Activated CD8-positive, alpha-beta T cell treated with anti-CD3 and anti-CD28 coated beads, Interleukin-2, amount 10 ng/mL, durations not matched to agents 7 days and 5 days (primary cell): ENCODE measurements at regions of chr20 and their contacts with region 1.

Region 1: DNA sequence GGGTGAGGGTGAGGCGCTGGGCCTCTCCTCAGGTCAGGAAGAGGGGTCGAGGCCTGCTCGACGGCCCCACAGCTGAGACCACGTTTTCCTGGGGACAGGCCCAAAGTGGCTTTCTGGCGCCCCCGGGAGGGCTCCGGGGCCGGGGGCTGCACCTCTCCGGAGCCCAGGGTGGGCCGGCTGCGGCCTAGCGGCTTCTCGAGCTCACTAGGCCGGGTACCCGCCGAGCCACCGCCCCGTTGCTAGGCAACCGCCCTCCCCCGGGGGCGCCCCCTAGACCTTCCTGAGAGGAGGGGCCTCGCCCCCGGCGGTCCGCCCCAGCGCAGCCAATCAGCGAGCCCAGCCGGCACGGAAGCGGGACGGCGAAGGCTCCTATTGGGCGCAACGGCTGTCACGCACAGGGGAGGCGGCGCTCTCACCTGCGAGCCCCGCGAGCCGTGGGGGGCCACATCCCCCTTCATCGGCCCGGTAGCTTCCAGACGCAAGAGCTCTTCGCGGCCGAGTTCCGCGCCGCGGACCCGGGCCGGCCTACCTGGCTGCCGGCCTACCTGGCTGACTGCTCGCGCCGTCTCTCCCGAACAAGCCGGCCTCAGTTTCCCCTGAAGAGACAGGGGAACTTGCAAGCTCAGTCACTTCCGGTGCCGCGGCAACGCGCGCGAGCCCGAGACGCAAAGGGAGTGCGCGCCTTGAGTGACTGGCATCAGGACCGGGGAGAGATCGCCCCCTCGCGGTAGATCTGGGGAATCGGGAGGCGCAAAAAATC is 831 bp upstream of the BCL2L1 start:
- DNase-seq: peak; percentile 99
- ATAC-seq: peak; percentile 92
- H3K4me3 Mint-ChIP-seq: peak overlapping the region; percentile 90
- H3K27ac Mint-ChIP-seq: peak overlapping the region; percentile 94
- H3K4me1 Mint-ChIP-seq: peaks cover 31% of the 10 kb centered on the region
- H3K27me3 Mint-ChIP-seq: no peaks in the 10 kb centered on the region

Region 2: GRCh38 chr20:31630187-31630790 is 93.2 kb before region 1 on chr20:
- CTCF ChIA-PET with region 1: interaction called, 146 read pairs
- POLR2A ChIA-PET with region 1: interaction called, 12 read pairs
- DNase-seq: no peak
- ATAC-seq: no peak
- H3K4me3 Mint-ChIP-seq: no peak overlapping the region
- H3K27ac Mint-ChIP-seq: no peak overlapping the region
- H3K4me1 Mint-ChIP-seq: peaks cover 8% of the 10 kb centered on the region
- H3K27me3 Mint-ChIP-seq: peaks cover 4% of the 10 kb centered on the region

Region 3: DNA sequence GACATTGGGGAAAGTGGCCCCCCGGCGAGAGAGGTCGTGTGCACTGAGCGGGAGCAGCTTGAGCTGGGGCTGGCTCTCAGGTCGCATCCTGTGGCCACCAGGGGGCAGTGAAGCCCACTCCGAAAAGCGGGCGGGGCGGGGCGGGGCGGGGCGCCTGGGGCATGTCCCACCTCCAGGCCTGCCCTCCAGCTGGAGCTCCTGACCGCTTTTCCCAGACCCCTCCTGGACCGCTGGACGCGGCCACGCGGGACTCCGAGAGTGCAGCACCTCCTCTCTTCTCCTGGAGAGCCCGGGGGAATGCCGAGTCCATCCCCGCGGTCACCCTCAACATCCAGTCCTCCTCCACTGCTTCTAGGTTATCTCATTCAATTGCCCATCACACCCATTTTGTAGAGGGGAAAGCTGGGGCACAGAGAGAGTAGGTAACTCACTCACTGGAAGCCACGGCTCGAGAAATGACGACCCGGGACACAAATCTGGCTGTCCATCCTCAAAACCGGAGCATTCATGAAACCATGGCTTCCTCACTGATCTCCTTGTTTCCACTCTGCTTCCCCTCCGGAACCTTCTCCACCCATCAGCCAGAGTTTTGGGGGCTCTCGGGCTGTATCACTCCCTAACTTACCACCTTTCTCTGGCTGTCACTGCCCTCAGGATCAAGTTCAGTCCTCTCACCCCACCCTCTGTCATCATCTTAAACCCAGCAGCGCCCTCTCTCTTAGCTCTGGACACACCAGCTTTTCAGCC is 61.7 kb before region 1 on chr20:
- CTCF ChIA-PET with region 1: interaction called, 677 read pairs
- POLR2A ChIA-PET with region 1: interaction called, 98 read pairs
- DNase-seq: peak; percentile 83
- ATAC-seq: peak; percentile 85
- H3K4me3 Mint-ChIP-seq: peak overlapping the region; percentile 75
- H3K27ac Mint-ChIP-seq: peak overlapping the region; percentile 90
- H3K4me1 Mint-ChIP-seq: peaks cover 59% of the 10 kb centered on the region
- H3K27me3 Mint-ChIP-seq: no peaks in the 10 kb centered on the region

Region 4: GRCh38 chr20:31691646-31692275 is 31.7 kb before region 1 on chr20:
- CTCF ChIA-PET with region 1: interaction called, 15 read pairs
- POLR2A ChIA-PET with region 1: interaction called, 15 read pairs
- DNase-seq: no peak
- ATAC-seq: peak; percentile 39
- H3K4me3 Mint-ChIP-seq: no peak overlapping the region
- H3K27ac Mint-ChIP-seq: peak overlapping the region; percentile 62
- H3K4me1 Mint-ChIP-seq: peaks cover 63% of the 10 kb centered on the region
- H3K27me3 Mint-ChIP-seq: no peaks in the 10 kb centered on the region

Region 5: GRCh38 chr20:31712564-31713311 is 10.8 kb before region 1 on chr20:
- CTCF ChIA-PET with region 1: interaction called, 57 read pairs
- POLR2A ChIA-PET with region 1: interaction called, 7 read pairs
- DNase-seq: no peak
- ATAC-seq: no peak
- H3K4me3 Mint-ChIP-seq: no peak overlapping the region
- H3K27ac Mint-ChIP-seq: peak overlapping the region; percentile 50
- H3K4me1 Mint-ChIP-seq: peaks cover 90% of the 10 kb centered on the region
- H3K27me3 Mint-ChIP-seq: no peaks in the 10 kb centered on the region

Region 6: DNA sequence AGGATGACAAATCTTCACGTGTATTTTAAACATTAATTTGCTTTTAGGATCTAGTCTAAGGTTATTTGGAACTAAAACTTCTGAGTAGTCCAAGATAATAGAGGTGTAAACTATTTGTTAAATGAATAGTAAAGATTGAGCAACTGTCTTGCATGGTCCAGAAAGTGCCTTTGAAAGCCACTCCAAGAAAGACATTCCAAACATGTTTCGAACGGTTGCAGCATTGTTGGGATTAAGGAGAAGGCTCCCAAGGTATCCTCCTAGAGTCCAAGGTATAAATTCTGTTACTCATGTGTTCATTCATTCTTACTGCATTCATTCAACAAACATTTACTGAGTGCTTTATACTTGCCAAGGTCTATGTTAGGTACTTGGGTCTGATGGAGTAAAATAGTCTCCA is 66.9 kb after region 1 on chr20:
- CTCF ChIA-PET with region 1: no interaction called
- POLR2A ChIA-PET with region 1: no interaction called
- DNase-seq: no peak
- ATAC-seq: no peak
- H3K4me3 Mint-ChIP-seq: no peak overlapping the region
- H3K27ac Mint-ChIP-seq: no peak overlapping the region
- H3K4me1 Mint-ChIP-seq: peaks cover 1% of the 10 kb centered on the region
- H3K27me3 Mint-ChIP-seq: no peaks in the 10 kb centered on the region

Region 7: DNA sequence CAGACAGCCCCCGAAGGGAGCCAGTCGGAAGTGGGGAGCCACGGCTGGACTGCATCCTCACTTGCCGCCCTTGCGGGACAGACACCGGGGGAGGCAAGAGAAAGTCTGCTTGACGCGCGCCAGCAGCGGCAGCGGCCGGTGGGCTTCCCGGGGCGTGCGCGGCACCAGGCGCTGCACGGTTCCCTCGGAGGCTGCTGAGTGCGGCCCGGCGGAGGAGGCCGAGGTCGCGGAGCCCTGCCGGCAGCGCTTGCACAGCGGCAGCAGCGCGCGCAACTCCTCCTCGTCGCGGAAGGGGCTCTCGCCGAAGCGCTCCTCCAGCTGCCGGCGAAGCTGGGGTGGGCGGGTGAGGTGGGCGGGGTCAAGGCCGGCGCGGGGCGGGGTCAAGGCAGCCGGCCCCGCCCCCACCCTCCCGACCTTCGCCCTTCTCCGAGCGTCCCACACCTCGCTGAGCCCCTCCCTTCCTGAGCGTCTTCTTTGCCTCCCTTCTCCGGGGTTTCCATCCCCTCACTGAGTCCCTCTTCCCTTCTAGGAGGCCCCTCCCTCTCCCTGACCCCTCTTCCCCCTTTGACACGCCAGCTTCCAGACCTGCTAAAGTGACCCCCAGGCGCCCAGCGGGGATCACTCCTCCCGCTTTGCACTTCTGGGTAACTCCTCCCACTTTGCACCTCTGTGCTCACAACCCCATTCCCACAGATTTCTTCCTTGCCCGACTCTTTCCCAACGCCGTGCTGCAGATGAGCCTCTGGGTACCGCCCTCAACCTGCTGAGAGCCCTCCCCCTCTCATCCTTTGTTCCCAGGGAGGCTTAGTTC is 138.1 kb after region 1 on chr20:
- CTCF ChIA-PET with region 1: no interaction called
- POLR2A ChIA-PET with region 1: no interaction called
- DNase-seq: peak; percentile 82
- ATAC-seq: peak; percentile 93
- H3K4me3 Mint-ChIP-seq: peak overlapping the region; percentile 26
- H3K27ac Mint-ChIP-seq: no peak overlapping the region
- H3K4me1 Mint-ChIP-seq: peaks cover 23% of the 10 kb centered on the region
- H3K27me3 Mint-ChIP-seq: peaks cover 28% of the 10 kb centered on the region